IMR-90 (cell line): ENCODE measurements at regions of chr2 and their contacts with region 1.

Region 1: GRCh38 chr2:167212014-167212648 is 323.9 kb downstream of the XIRP2 start:
- DNase-seq: peak; percentile 66
- ATAC-seq: peak; percentile 70
- H3K4me3 ChIP-seq: no peak overlapping the region
- H3K27ac ChIP-seq: no peak overlapping the region
- H3K4me1 ChIP-seq: no peaks in the 10 kb centered on the region
- H3K27me3 ChIP-seq: no peaks in the 10 kb centered on the region
- CTCF ChIP-seq: peak; percentile 77
- POLR2A ChIP-seq: no peak
- RAD21 ChIP-seq: peak; percentile 89

Region 2: GRCh38 chr2:166700079-166700478 is 512.1 kb before region 1 on chr2:
- CTCF ChIA-PET with region 1: no interaction called
- POLR2A ChIA-PET with region 1: no interaction called
- dilution Hi-C with region 1: no loop called
- in situ Hi-C with region 1: no loop called
- intact Hi-C with region 1: loop called (anchors 2 kb)
- DNase-seq: peak; percentile 52
- ATAC-seq: peak; percentile 62; the same call in 1 of the 2 replicates
- H3K4me3 ChIP-seq: no peak overlapping the region
- H3K27ac ChIP-seq: no peak overlapping the region
- H3K4me1 ChIP-seq: no peaks in the 10 kb centered on the region
- H3K27me3 ChIP-seq: no peaks in the 10 kb centered on the region
- CTCF ChIP-seq: peak; percentile 75
- POLR2A ChIP-seq: no peak
- RAD21 ChIP-seq: peak; percentile 82

Region 3: DNA sequence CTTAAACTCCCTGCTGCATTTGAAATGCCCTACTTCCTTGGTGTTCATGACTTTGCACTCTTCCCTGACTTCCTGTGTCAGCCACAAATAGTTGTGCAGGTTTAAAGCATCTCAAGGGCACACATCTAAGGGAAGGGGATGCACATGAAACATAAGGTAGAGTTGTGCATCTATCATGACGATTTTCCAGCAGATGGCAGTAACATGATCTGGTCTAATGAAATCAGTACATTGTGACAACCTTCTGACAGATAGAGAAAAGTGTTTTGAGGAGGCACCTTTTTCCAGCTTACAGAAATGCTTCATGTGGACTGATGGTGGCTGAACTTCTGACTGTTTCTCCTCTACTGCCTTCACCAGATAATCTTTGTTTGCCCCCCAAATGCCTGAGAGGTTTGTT is 85.0 kb before region 1 on chr2:
- CTCF ChIA-PET with region 1: interaction called, 4 read pairs
- POLR2A ChIA-PET with region 1: no interaction called
- dilution Hi-C with region 1: no loop called
- in situ Hi-C with region 1: no loop called
- intact Hi-C with region 1: loop called (anchors 5 kb)
- DNase-seq: peak; percentile 44
- ATAC-seq: no peak
- H3K4me3 ChIP-seq: no peak overlapping the region
- H3K27ac ChIP-seq: no peak overlapping the region
- H3K4me1 ChIP-seq: no peaks in the 10 kb centered on the region
- H3K27me3 ChIP-seq: no peaks in the 10 kb centered on the region
- CTCF ChIP-seq: peak; percentile 34
- POLR2A ChIP-seq: no peak
- RAD21 ChIP-seq: peak; percentile 37

Region 4: GRCh38 chr2:167489325-167489724 is 277.2 kb after region 1 on chr2:
- CTCF ChIA-PET with region 1: no interaction called
- POLR2A ChIA-PET with region 1: no interaction called
- dilution Hi-C with region 1: no loop called
- in situ Hi-C with region 1: no loop called
- intact Hi-C with region 1: no loop called
- DNase-seq: no peak
- ATAC-seq: no peak
- H3K4me3 ChIP-seq: no peak overlapping the region
- H3K27ac ChIP-seq: no peak overlapping the region
- H3K4me1 ChIP-seq: no peaks in the 10 kb centered on the region
- H3K27me3 ChIP-seq: no peaks in the 10 kb centered on the region
- CTCF ChIP-seq: no peak
- POLR2A ChIP-seq: no peak
- RAD21 ChIP-seq: no peak

Region 5: GRCh38 chr2:167550448-167550847 is 338.3 kb after region 1 on chr2:
- CTCF ChIA-PET with region 1: no interaction called
- POLR2A ChIA-PET with region 1: no interaction called
- dilution Hi-C with region 1: no loop called
- in situ Hi-C with region 1: no loop called
- intact Hi-C with region 1: loop called (anchors 5 kb)
- DNase-seq: peak; percentile 27
- ATAC-seq: 0 out of 2 replicates have a peak, but pooled peaks have one; percentile 40
- H3K4me3 ChIP-seq: no peak overlapping the region
- H3K27ac ChIP-seq: no peak overlapping the region
- H3K4me1 ChIP-seq: no peaks in the 10 kb centered on the region; the same call in 1 of the 2 replicates
- H3K27me3 ChIP-seq: no peaks in the 10 kb centered on the region
- CTCF ChIP-seq: peak; percentile 42; the same call in 1 of the 2 replicates
- POLR2A ChIP-seq: no peak
- RAD21 ChIP-seq: peak; percentile 39

Region 6: DNA sequence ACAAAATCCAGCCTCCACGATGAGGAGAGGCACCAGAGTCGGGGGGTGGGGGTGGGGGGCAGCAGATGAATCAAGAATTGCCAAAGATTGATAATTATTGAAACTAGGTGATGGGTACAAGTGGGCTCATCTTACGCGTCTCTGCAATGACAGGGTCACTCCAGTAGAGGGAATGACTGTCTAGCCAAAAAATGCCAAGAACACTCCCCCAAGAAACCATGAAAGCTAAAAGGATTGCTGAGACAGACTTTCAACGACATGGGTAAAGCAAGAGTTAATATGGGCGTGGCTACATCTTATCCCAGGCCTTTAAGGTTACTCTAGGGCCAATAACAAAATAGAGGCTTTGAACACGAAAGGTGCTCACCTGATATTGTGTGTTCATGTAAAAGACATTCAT is 948.8 kb after region 1 on chr2:
- CTCF ChIA-PET with region 1: no interaction called
- POLR2A ChIA-PET with region 1: no interaction called
- dilution Hi-C with region 1: no loop called
- in situ Hi-C with region 1: no loop called
- intact Hi-C with region 1: no loop called
- DNase-seq: no peak
- ATAC-seq: no peak; the same call in 1 of the 2 replicates
- H3K4me3 ChIP-seq: no peak overlapping the region
- H3K27ac ChIP-seq: no peak overlapping the region
- H3K4me1 ChIP-seq: peaks cover 4% of the 10 kb centered on the region
- H3K27me3 ChIP-seq: no peaks in the 10 kb centered on the region
- CTCF ChIP-seq: 0 out of 2 replicates have a peak, but pooled peaks have one; percentile 5
- POLR2A ChIP-seq: no peak
- RAD21 ChIP-seq: peak; percentile 27; the same call in 1 of the 2 replicates